Activated CD8-positive, alpha-beta T cell treated with anti-CD3 and anti-CD28 coated beads for 36 hours (primary cell): ENCODE measurements at regions of chr20 and their contacts with region 1.

Region 1: DNA sequence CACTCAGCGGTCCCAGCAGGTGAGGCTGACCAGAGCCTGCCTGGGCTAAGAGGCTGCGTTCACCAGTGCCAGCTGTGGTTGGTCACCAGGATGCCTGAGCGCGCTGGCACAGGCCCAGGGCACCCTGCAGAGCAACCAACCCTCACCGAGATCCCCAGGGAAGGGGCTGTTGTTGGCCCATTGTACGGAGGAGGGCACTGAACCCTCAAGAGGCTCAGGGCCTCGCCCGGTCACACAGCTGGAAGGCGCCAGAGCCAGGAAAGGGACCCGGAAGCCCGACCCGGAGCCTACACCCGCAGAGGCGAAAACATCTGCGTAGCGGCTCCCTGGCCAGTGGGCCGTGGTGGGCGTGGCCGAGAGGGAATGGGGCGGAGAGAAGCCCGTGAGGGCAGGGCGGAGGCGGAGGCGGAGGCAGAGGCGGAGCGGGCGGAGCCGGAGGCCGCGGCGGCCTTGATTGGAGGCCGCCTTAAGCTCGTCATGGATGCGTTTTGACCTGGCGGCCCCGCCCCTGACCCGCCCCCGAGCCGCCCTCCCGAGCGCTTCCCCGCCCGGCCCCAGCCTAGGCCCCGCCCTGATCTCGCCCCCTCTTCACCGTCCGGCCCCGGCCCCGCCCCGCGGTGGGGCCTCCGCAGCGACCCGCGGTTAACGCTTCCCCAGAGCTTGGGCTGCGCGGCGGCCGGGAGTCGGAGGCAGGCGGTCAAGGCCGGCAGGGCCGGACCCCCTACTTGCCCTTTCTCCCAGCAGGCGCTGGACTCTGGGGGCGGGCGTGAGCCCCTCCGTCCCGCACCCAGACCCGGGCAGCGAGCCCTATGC is 2.2 kb upstream of the MRGBP start:
- DNase-seq: peak; percentile 97
- ATAC-seq: peak; percentile 82
- H3K4me3 Mint-ChIP-seq: peak overlapping the region; percentile 83
- H3K27ac Mint-ChIP-seq: peak overlapping the region; percentile 91
- H3K4me1 Mint-ChIP-seq: peaks cover 34% of the 10 kb centered on the region
- H3K27me3 Mint-ChIP-seq: no peaks in the 10 kb centered on the region
- CTCF ChIP-seq: no peak

Region 2: DNA sequence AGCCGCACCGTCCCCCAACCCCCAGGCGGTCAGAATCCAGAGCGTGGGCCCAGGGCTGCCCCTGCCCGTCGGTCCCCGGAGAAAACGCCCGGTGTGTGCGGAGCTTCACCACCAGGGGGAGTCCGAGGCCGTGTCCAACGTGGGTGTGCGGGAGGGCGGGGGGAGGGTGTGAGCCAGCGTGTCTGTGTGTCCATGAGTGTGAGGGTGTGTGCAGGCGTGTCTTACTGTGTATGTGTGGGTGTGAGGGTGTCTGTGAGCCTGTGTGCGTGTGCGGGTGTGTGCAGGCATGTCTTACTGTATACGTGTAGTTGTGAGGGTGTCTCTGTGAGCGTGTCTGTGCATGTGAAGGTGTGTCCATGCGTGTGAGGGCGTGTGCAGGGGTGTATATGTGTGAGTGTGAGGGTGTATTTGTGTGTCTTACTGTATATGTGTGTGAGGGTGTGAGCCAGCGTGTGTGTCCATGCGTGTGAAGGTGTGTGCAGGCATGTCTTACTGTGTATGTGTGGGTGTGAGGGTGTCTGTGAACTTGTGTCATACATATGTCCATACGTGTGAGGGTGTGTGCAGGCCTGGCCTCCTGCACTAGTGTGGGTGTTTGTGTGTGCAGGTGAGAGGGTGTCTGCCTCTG is 293.8 kb before region 1 on chr20:
- CTCF ChIA-PET with region 1: interaction called, 5 read pairs
- POLR2A ChIA-PET with region 1: no interaction called
- intact Hi-C with region 1: loop called (anchors 5 kb)
- DNase-seq: peak; percentile 85
- ATAC-seq: peak; percentile 22
- H3K4me3 Mint-ChIP-seq: no peak overlapping the region
- H3K27ac Mint-ChIP-seq: peak overlapping the region; percentile 95
- H3K4me1 Mint-ChIP-seq: peaks cover 31% of the 10 kb centered on the region
- H3K27me3 Mint-ChIP-seq: peaks cover 4% of the 10 kb centered on the region
- CTCF ChIP-seq: peak; percentile 80

Region 3: DNA sequence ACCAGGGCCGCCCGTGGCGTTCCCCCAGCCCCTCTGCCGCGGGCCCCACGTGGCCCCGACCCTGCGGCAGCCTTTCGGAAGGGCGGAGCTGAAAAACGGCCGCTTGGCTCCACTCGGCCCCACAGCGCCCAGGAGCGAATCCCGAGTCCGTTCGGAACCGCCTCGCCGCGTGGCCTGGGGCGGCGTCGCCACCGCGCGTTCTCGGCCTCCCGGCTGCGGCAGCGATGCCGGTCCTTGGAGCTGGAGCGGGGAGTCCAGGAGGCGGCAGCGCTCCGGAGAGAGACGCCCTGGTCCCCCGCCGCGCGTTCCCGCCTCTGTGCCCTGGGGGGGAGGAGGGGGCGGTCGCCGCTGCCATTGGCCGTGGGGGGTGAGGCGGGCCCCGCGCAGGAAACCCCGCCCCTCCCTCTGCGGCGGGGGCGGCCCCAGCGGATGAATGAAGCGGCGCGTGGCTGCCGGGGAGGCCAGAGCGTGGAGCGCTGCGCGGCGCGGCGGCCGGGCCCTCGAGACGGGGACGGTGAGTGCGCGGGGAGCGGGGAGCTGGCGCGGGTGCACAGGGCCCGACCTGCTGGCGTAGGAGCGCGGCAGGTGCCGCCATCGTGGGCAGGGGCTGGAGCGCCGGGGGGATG is 152.0 kb before region 1 on chr20 and contains the start of gene SLCO4A1:
- CTCF ChIA-PET with region 1: interaction called, 12 read pairs
- POLR2A ChIA-PET with region 1: interaction called, 11 read pairs
- intact Hi-C with region 1: no loop called
- DNase-seq: peak; percentile 90
- ATAC-seq: peak; percentile 93
- H3K4me3 Mint-ChIP-seq: peak within 1 kb of the TSS; percentile 79
- H3K27ac Mint-ChIP-seq: peak within 1 kb of the TSS; percentile 81
- H3K4me1 Mint-ChIP-seq: peaks cover 26% of the 10 kb centered on the region
- H3K27me3 Mint-ChIP-seq: peaks cover 12% of the 10 kb centered on the region
- CTCF ChIP-seq: no peak
- total RNA-seq, gene SLCO4A1: 66.5 to 68.4 TPM

Region 4: DNA sequence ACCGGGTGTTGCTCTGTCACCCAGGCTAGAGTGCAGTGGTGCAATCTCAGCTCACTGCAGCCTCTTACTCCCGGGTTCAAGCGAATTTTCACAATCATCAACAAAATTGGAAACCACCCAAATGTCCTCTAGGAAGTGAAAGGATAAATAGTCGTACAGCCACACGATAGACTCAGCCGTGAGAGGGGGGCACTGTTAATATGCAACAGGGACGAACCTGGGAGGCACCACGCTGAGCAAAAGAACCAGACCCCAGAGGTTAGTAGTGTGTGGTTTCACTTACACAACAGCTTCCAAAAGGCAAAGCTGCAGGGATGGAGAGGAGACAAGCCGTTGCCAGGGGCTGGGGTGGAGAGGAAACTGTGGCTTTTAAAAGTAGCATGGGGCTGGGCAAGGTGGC is 115.6 kb before region 1 on chr20:
- CTCF ChIA-PET with region 1: interaction called, 16 read pairs
- POLR2A ChIA-PET with region 1: no interaction called
- intact Hi-C with region 1: no loop called
- DNase-seq: no peak
- ATAC-seq: no peak
- H3K4me3 Mint-ChIP-seq: no peak overlapping the region
- H3K27ac Mint-ChIP-seq: no peak overlapping the region
- H3K4me1 Mint-ChIP-seq: no peaks in the 10 kb centered on the region
- H3K27me3 Mint-ChIP-seq: no peaks in the 10 kb centered on the region
- CTCF ChIP-seq: no peak

Region 5: GRCh38 chr20:62716198-62716940 is 77.7 kb before region 1 on chr20:
- CTCF ChIA-PET with region 1: interaction called, 12 read pairs
- POLR2A ChIA-PET with region 1: no interaction called
- intact Hi-C with region 1: no loop called
- DNase-seq: peak; percentile 58
- ATAC-seq: peak; percentile 82
- H3K4me3 Mint-ChIP-seq: peak overlapping the region; percentile 41
- H3K27ac Mint-ChIP-seq: peak overlapping the region; percentile 77
- H3K4me1 Mint-ChIP-seq: peaks cover 22% of the 10 kb centered on the region
- H3K27me3 Mint-ChIP-seq: peaks cover 3% of the 10 kb centered on the region
- CTCF ChIP-seq: no peak

Region 6: GRCh38 chr20:62808211-62808865 is 14.2 kb after region 1 on chr20:
- CTCF ChIA-PET with region 1: interaction called, 33 read pairs
- POLR2A ChIA-PET with region 1: interaction called, 12 read pairs
- intact Hi-C with region 1: no loop called
- DNase-seq: peak; percentile 78
- ATAC-seq: peak; percentile 63
- H3K4me3 Mint-ChIP-seq: peak overlapping the region; percentile 32
- H3K27ac Mint-ChIP-seq: no peak overlapping the region
- H3K4me1 Mint-ChIP-seq: peaks cover 30% of the 10 kb centered on the region
- H3K27me3 Mint-ChIP-seq: no peaks in the 10 kb centered on the region
- CTCF ChIP-seq: peak; percentile 97

Region 7: GRCh38 chr20:63191400-63191799 is 397.3 kb after region 1 on chr20:
- CTCF ChIA-PET with region 1: no interaction called
- POLR2A ChIA-PET with region 1: no interaction called
- intact Hi-C with region 1: no loop called
- DNase-seq: no peak
- ATAC-seq: no peak
- H3K4me3 Mint-ChIP-seq: no peak overlapping the region
- H3K27ac Mint-ChIP-seq: no peak overlapping the region
- H3K4me1 Mint-ChIP-seq: peaks cover 2% of the 10 kb centered on the region
- H3K27me3 Mint-ChIP-seq: no peaks in the 10 kb centered on the region
- CTCF ChIP-seq: no peak